Activated CD4-positive, alpha-beta memory T cell treated with anti-CD3 and anti-CD28 coated beads, Interleukin-2, amount 10 ng/mL, durations not matched to agents 7 days and 5 days (primary cell): ENCODE measurements at regions of chr1 and their contacts with region 1.

Region 1: GRCh38 chr1:30232288-30232899 is 491.0 kb downstream of the MATN1 start:
- DNase-seq: peak; percentile 44
- H3K4me3 Mint-ChIP-seq: no peak overlapping the region
- H3K27ac Mint-ChIP-seq: no peak overlapping the region
- H3K4me1 Mint-ChIP-seq: no peaks in the 10 kb centered on the region
- H3K27me3 Mint-ChIP-seq: peaks cover 1% of the 10 kb centered on the region

Region 2: GRCh38 chr1:30191154-30191702 is 41.2 kb before region 1 on chr1:
- CTCF ChIA-PET with region 1: interaction called, 11 read pairs
- POLR2A ChIA-PET with region 1: no interaction called
- DNase-seq: peak; percentile 80
- H3K4me3 Mint-ChIP-seq: no peak overlapping the region
- H3K27ac Mint-ChIP-seq: peak overlapping the region; percentile 82
- H3K4me1 Mint-ChIP-seq: peaks cover 46% of the 10 kb centered on the region
- H3K27me3 Mint-ChIP-seq: peaks cover 1% of the 10 kb centered on the region

Region 3: DNA sequence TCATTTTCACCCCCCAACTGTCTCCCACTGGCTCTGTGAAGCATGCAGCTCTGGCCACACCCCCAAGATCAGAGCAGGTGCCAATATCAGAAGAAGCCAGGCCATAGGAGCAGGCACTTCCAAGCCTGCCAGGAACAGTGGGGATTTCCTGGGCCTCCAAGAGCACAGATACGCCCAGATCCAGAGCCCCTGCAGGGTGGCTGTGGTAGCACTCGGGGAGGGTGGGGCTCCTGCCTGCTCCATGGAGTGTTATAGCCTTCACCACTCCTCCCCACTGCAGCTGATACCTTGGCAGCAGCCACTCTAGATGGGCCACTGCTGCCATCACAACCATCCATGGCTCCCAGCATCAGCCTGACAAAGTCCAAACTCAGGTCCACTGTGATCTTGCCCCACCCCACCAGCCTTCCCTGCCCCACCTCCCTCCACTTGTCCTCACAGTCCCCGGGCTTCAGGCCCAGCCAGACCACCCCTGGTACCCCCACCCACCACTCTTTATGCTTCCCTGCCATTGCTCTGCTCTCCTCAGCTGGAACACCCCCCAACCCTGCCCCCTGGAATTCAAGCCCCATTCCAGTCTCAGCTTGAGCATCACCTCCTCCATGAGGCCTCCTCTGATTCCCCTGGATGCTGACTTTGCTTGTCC is 42.7 kb after region 1 on chr1:
- CTCF ChIA-PET with region 1: no interaction called
- POLR2A ChIA-PET with region 1: no interaction called
- DNase-seq: peak; percentile 9
- H3K4me3 Mint-ChIP-seq: no peak overlapping the region
- H3K27ac Mint-ChIP-seq: no peak overlapping the region
- H3K4me1 Mint-ChIP-seq: no peaks in the 10 kb centered on the region
- H3K27me3 Mint-ChIP-seq: peaks cover 1% of the 10 kb centered on the region

Region 4: DNA sequence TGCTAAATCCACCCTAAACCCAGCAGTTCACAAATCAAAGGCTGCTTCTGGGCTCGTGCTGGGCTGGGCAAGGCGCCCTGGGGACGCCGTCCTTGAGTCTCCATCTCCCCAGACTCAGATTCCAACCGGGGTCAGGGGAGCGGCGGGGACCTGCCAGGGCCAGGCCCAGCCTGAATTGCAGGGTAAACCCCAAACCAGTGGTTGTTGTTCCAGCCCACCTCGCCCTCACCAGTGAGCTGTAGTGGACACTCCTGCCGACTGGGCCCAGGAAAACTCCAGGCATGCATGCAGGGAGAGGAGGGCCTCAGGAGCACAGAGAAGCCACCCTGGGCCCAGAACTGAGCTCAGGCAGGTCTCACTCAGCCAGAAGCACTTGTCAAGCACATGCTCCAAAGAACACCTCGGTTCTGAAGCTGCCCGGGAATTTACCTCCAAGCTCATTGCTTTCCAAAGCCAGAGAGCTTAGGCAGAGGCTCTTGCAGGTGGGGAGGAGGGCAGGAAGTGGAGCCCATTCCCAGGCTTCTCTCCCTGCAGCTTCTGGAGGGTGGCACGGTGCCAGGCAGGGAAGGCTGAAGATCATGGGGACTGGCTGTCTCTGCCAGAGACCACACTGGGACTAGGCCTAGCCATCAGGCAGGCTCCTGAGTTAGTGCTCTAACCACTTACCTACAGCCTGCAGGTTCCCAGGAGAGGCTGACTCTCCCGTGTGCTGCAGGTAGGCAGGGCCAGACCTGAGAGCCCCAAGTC is 54.0 kb after region 1 on chr1:
- CTCF ChIA-PET with region 1: no interaction called
- POLR2A ChIA-PET with region 1: no interaction called
- DNase-seq: no peak
- H3K4me3 Mint-ChIP-seq: no peak overlapping the region
- H3K27ac Mint-ChIP-seq: no peak overlapping the region
- H3K4me1 Mint-ChIP-seq: peaks cover 20% of the 10 kb centered on the region
- H3K27me3 Mint-ChIP-seq: peaks cover 15% of the 10 kb centered on the region

Region 5: DNA sequence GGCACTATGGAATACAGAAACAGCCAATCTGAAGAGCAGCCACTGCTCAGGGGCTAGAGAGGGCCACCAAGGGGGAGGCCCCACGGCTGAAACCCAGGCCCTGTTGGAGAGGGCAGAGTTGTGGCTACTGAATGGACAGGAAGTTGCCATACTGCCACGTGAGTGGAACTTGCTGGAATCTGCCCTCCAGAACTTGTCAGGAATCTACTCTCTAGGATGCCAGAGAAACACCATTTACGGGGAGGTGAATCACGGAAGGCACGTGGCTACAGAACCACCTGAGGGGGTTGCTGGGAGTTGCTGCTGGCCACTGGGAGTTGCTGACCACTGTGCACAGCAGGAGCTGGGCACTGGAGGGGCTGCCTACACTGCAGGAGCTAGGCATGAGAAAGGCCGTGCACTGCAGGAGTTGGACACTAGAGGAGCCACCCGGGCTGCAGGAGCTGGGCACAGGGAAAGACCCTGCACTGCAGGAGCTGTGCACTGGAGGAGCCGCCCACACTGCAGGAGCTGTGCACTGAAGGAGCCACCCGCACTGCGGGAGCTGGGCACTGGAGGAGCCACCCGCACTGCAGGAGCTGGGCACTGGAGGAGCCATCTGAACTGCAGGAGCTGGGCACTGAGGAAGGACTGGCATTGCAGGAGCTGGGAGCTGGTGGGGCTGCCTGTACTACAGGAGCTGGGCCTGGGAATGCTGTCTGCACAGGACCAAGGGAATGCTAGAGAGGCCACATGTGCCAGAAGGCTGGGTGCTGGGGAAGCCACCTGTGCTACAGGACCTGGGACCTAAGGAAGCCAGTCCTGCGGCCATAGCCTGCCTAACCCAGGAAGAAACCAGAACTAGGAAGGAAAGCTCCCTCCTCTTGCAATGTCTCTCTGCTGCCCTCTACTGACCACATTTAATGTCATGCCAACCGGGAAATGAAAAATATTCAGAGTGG is 147.6 kb after region 1 on chr1:
- CTCF ChIA-PET with region 1: interaction called, 10 read pairs
- POLR2A ChIA-PET with region 1: no interaction called
- DNase-seq: peak; percentile 49
- H3K4me3 Mint-ChIP-seq: no peak overlapping the region
- H3K27ac Mint-ChIP-seq: no peak overlapping the region
- H3K4me1 Mint-ChIP-seq: no peaks in the 10 kb centered on the region
- H3K27me3 Mint-ChIP-seq: peaks cover 4% of the 10 kb centered on the region